ENCODE measurements at regions of chr11 and their contacts with region 1.

Region 1: DNA sequence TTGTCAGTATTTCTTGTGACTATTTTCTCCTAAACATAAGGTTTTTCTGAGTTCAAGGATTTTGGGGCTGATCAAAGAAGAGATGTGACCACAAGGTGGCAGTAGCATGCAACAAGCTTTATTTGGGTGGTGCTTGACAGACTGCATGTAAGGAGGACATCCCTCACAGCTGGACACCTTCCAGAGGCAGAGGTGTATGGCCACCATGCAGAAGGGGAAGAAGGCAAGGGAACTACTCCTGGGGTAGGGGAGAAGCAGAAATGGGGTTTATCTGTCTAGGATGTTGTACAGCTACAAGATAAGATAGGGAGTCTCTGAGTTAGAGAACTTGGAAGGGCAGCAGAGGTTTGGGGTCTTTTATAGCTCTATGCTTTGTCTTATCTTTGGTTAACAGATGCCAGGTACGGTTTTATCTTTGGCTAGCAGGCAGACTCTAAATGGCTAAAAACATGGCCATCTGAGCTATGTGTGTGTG is 5.1 kb upstream of the BIRC2 start:
- DNase-seq: peak; percentile 81
- H3K4me3 Mint-ChIP-seq: no peak overlapping the region
- H3K27ac Mint-ChIP-seq: no peak overlapping the region
- H3K4me1 Mint-ChIP-seq: peaks cover 22% of the 10 kb centered on the region
- H3K27me3 Mint-ChIP-seq: no peaks in the 10 kb centered on the region

Region 2: DNA sequence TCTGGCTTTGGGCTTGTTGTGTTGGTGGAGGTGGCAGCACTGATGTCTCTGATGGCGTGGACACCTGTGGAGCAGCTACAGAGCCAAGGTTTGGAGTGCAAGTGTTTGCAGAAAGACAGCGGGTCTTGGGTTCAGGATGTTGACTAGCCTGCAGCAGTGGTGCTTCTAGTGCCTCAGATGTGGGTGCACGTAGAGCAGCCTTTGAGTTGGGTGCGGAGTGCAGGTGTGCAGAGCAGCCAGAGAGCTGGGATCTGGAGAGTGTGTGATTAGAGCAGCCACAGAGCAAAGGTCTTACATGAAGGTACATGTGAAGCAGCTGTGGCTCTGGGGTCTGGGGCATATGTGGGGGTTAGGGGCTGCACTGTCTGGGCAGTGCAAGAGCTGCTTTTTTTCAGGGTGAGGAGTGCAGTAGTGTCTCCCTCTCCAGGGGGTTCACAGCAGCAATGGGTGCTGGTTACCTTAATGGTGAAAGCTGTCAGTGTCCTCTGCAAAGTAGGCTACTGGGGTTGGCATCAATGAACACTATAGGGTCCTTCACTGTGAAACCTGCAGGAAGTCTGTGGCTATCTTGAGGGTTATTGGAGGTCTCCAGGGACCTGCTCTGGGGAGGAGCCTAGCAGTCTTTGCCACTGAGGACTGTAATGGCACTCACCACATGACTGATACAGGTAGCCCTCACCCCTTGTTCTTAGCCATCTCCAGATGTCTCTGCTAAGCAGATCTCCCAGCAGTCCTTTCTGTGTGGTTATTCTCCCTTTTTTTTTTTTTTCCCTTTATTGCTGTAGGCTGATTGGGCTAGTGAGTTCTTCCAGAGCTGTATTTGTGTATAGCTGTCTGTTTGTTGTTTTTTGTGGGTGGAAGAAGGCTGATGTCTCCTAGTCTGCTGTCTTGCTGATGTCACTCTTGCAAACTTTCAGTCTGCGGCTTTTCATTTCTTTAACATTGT is 19.5 kb after region 1 on chr11:
- CTCF ChIA-PET with region 1: interaction called, 20 read pairs
- DNase-seq: peak; percentile 79
- H3K4me3 Mint-ChIP-seq: peak overlapping the region; percentile 16
- H3K27ac Mint-ChIP-seq: peak overlapping the region; percentile 92
- H3K4me1 Mint-ChIP-seq: peaks cover 59% of the 10 kb centered on the region
- H3K27me3 Mint-ChIP-seq: no peaks in the 10 kb centered on the region

Region 3: DNA sequence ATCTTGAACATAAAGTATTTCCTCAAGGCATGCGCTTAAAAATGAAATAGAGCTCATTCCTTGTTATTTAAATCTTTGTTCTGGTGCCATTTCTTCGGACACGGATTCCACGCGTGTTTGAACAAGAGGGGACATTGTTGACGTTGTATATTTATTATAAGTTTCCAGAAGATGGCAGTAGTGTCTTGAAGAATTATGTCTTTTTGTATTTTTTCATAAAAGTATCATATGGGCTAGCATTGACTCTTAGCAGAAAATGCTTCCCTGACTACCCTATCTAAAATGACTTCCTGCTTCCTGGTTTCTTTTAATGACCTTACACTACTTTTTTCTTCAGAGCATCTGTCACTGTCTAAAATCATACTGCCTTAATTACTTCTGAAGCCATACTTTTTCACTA is 25.5 kb after region 1 on chr11:
- CTCF ChIA-PET with region 1: interaction called, 18 read pairs
- DNase-seq: no peak
- H3K4me3 Mint-ChIP-seq: no peak overlapping the region
- H3K27ac Mint-ChIP-seq: peak overlapping the region; percentile 12
- H3K4me1 Mint-ChIP-seq: peaks cover 36% of the 10 kb centered on the region
- H3K27me3 Mint-ChIP-seq: no peaks in the 10 kb centered on the region

Region 4: DNA sequence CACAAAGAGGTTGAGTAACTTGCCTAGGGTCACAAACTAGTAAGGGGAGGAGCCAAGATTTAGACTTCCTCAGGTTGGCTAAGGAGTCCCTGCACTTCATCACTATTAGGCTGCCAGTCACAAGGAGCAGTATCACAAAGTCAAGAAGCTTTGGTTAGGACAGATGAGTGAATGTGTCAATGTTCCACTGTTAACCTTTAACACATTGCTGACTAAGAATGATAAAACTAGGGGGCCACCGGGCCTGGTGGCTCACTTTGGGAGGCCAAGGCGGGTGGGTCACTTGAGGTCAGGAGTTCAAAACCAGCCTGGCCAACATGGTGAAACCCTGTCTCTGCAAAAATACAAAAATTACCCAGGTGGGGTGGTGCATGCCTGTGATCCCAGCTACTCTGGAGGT is 78.7 kb after region 1 on chr11:
- CTCF ChIA-PET with region 1: no interaction called
- DNase-seq: no peak
- H3K4me3 Mint-ChIP-seq: no peak overlapping the region
- H3K27ac Mint-ChIP-seq: no peak overlapping the region
- H3K4me1 Mint-ChIP-seq: peaks cover 93% of the 10 kb centered on the region
- H3K27me3 Mint-ChIP-seq: no peaks in the 10 kb centered on the region

Region 5: GRCh38 chr11:102495161-102496042 is 153.5 kb after region 1 on chr11:
- CTCF ChIA-PET with region 1: interaction called, 53 read pairs
- DNase-seq: peak; percentile 44
- H3K4me3 Mint-ChIP-seq: no peak overlapping the region
- H3K27ac Mint-ChIP-seq: no peak overlapping the region
- H3K4me1 Mint-ChIP-seq: peaks cover 19% of the 10 kb centered on the region
- H3K27me3 Mint-ChIP-seq: peaks cover 26% of the 10 kb centered on the region

Region 6: GRCh38 chr11:102518296-102519094 is 176.6 kb after region 1 on chr11:
- CTCF ChIA-PET with region 1: interaction called, 15 read pairs
- DNase-seq: no peak
- H3K4me3 Mint-ChIP-seq: no peak overlapping the region
- H3K27ac Mint-ChIP-seq: no peak overlapping the region
- H3K4me1 Mint-ChIP-seq: peaks cover 4% of the 10 kb centered on the region
- H3K27me3 Mint-ChIP-seq: peaks cover 25% of the 10 kb centered on the region

Region 7: GRCh38 chr11:102666331-102666957 is 324.6 kb after region 1 on chr11:
- CTCF ChIA-PET with region 1: interaction called, 44 read pairs
- DNase-seq: peak; percentile 33
- H3K4me3 Mint-ChIP-seq: no peak overlapping the region
- H3K27ac Mint-ChIP-seq: no peak overlapping the region
- H3K4me1 Mint-ChIP-seq: no peaks in the 10 kb centered on the region
- H3K27me3 Mint-ChIP-seq: peaks cover 4% of the 10 kb centered on the region

Measured in activated naive CD4-positive, alpha-beta T cell treated with anti-CD3 and anti-CD28 coated beads, Interleukin-2, amount 10 ng/mL, durations not matched to agents 7 days and 5 days (primary cell).